CD4-positive, alpha-beta memory T cell (primary cell): ENCODE measurements at regions of chr5 and their contacts with region 1.

Region 1: GRCh38 chr5:140357726-140358093 is 2.3 kb upstream of the SLC4A9 start:
- DNase-seq: peak; percentile 66 to 73 (median 72)
- H3K4me3 ChIP-seq: peak overlapping the region in 1 of 2 donors; percentile 46
- H3K4me3 Mint-ChIP-seq: peak overlapping the region; percentile 76 to 91 (median 84)
- H3K27ac ChIP-seq: no peak overlapping the region
- H3K27ac Mint-ChIP-seq: peak overlapping the region in 6 of 7 donors; percentile 68 to 93 (median 82)
- H3K4me1 ChIP-seq: peaks cover 13% of the 10 kb centered on the region
- H3K4me1 Mint-ChIP-seq: peaks cover 9 to 17% (median 11%) of the 10 kb centered on the region in 4 donors
- H3K27me3 ChIP-seq: no peaks in the 10 kb centered on the region
- H3K27me3 Mint-ChIP-seq: peaks cover 0 to 2% of the 10 kb centered on the region in 2 donors

Region 2: DNA sequence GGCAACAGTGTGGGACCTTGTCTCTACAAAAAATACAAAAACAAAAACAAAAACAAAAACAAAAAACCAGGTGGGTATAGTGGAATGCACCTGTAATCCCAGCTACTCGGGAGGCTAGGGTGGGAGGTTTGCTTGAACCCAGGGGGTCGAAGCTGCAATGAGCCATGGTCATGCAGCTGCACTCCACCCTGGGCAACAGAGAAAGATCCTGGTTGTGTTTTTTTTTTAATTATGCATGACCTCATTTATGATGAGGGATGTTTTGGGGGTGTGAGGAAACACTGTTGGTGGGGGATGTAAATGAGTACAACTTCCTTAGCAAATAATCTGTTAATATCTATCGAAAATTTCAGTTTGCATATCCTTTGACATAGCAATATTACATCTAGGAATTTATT is 825.9 kb before region 1 on chr5:
- CTCF ChIA-PET with region 1: no interaction called
- POLR2A ChIA-PET with region 1: no interaction called
- intact Hi-C with region 1: no loop called
- DNase-seq: no peak
- H3K4me3 ChIP-seq: no peak overlapping the region
- H3K4me3 Mint-ChIP-seq: no peak overlapping the region
- H3K27ac ChIP-seq: no peak overlapping the region
- H3K27ac Mint-ChIP-seq: no peak overlapping the region
- H3K4me1 ChIP-seq: no peaks in the 10 kb centered on the region
- H3K4me1 Mint-ChIP-seq: no peaks in the 10 kb centered on the region
- H3K27me3 ChIP-seq: no peaks in the 10 kb centered on the region
- H3K27me3 Mint-ChIP-seq: peaks cover 0 to 3% of the 10 kb centered on the region in 2 donors

Region 3: DNA sequence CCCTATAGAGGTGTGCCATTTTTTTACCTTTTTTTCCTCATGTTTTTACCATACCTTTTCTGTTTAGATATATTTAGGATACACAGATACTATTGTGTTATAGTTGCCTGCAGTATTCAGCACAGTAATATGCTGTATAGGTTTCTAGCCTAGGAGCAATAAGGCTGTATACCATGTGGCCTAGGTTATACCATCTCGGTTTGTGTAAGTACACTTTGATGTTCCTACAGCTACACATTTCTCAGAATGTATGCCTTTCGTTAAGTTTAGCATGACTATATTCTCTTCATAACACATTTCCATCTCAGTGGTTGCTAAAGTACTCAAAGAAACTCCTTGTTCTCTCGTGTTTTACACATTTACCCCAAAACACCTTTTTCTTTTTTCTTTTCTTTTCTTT is 773.6 kb before region 1 on chr5:
- CTCF ChIA-PET with region 1: no interaction called
- POLR2A ChIA-PET with region 1: no interaction called
- intact Hi-C with region 1: no loop called
- DNase-seq: no peak
- H3K4me3 ChIP-seq: no peak overlapping the region
- H3K4me3 Mint-ChIP-seq: no peak overlapping the region
- H3K27ac ChIP-seq: no peak overlapping the region
- H3K27ac Mint-ChIP-seq: peak overlapping the region in 3 of 7 donors; percentile 13 to 29 (median 27)
- H3K4me1 ChIP-seq: peaks cover 67% of the 10 kb centered on the region
- H3K4me1 Mint-ChIP-seq: peaks cover 27 to 71% (median 47%) of the 10 kb centered on the region in 4 donors
- H3K27me3 ChIP-seq: no peaks in the 10 kb centered on the region
- H3K27me3 Mint-ChIP-seq: no peaks in the 10 kb centered on the region

Region 4: DNA sequence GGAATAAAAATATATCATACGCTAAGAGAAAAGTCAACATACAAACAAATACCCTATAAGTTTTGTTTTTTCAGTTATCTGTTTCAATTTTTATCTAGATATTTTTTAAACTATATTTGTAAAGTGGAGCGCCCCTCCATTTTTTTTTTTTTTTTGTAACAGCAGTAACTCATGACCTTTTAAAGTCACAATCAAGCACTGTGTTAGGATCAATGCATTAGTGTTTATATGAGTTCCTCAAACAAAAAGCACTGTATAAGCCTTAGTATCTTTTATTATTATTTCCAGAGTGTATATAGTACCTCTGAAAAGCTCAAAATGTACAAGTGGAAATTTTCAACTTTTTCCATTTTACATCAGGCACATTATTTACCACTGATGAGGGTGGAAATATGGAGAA is 75.4 kb before region 1 on chr5:
- CTCF ChIA-PET with region 1: no interaction called
- POLR2A ChIA-PET with region 1: no interaction called
- intact Hi-C with region 1: no loop called
- DNase-seq: no peak
- H3K4me3 ChIP-seq: no peak overlapping the region
- H3K4me3 Mint-ChIP-seq: no peak overlapping the region
- H3K27ac ChIP-seq: no peak overlapping the region
- H3K27ac Mint-ChIP-seq: peak overlapping the region in 1 of 7 donors; percentile 31
- H3K4me1 ChIP-seq: no peaks in the 10 kb centered on the region
- H3K4me1 Mint-ChIP-seq: peaks cover 6 to 12% (median 7%) of the 10 kb centered on the region in 4 donors
- H3K27me3 ChIP-seq: no peaks in the 10 kb centered on the region
- H3K27me3 Mint-ChIP-seq: no peaks in the 10 kb centered on the region

Region 5: GRCh38 chr5:140725799-140726471 is 368.2 kb after region 1 on chr5:
- CTCF ChIA-PET with region 1: interaction called, 24 read pairs
- POLR2A ChIA-PET with region 1: no interaction called
- intact Hi-C with region 1: no loop called
- DNase-seq: peak; percentile 61 to 88 (median 63)
- H3K4me3 ChIP-seq: peak overlapping the region; percentile 39 to 42
- H3K4me3 Mint-ChIP-seq: peak overlapping the region; percentile 75 to 90 (median 81)
- H3K27ac ChIP-seq: no peak overlapping the region
- H3K27ac Mint-ChIP-seq: peak overlapping the region; percentile 37 to 99 (median 74)
- H3K4me1 ChIP-seq: peaks cover 6% of the 10 kb centered on the region
- H3K4me1 Mint-ChIP-seq: peaks cover 9 to 25% (median 17%) of the 10 kb centered on the region in 4 donors
- H3K27me3 ChIP-seq: no peaks in the 10 kb centered on the region
- H3K27me3 Mint-ChIP-seq: peaks cover 3 to 11% of the 10 kb centered on the region in 2 donors

Region 6: DNA sequence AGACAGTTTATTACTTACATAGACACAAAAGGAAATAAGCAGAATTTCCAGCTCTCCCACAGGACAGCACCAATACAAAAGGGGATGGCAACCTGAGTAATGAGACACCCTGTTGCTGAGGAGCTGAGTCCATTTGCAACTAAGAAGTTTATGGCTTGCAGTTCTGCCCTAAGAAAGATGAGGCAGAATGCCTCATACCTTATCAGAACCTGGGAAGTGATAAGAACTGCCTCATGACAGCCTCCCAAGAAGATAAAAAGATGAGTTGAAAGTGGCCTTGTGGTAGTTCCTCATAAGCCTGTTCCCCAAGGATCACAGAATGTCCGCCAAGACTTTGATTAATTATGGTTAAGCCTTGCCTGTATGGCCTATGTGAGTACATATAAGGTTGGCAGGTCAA is 384.3 kb after region 1 on chr5:
- CTCF ChIA-PET with region 1: no interaction called
- POLR2A ChIA-PET with region 1: no interaction called
- intact Hi-C with region 1: no loop called
- DNase-seq: no peak
- H3K4me3 ChIP-seq: no peak overlapping the region
- H3K4me3 Mint-ChIP-seq: no peak overlapping the region
- H3K27ac ChIP-seq: no peak overlapping the region
- H3K27ac Mint-ChIP-seq: no peak overlapping the region
- H3K4me1 ChIP-seq: no peaks in the 10 kb centered on the region
- H3K4me1 Mint-ChIP-seq: no peaks in the 10 kb centered on the region
- H3K27me3 ChIP-seq: no peaks in the 10 kb centered on the region
- H3K27me3 Mint-ChIP-seq: peaks cover 9% of the 10 kb centered on the region in 2 donors